Ovary (tissue), 10 donors: ENCODE measurements at regions of chr17 and their contacts with region 1.

Region 1: GRCh38 chr17:31834448-31834847 is 24.6 kb downstream of the COPRS start:
- DNase-seq: no peak
- H3K4me3 ChIP-seq: no peak overlapping the region
- H3K27ac ChIP-seq: no peak overlapping the region
- H3K4me1 ChIP-seq: no peaks in the 10 kb centered on the region
- H3K27me3 ChIP-seq: no peaks in the 10 kb centered on the region
- CTCF ChIP-seq: no peak
- EP300 ChIP-seq: no peak
- POLR2A ChIP-seq: no peak

Region 2: GRCh38 chr17:31549525-31550388 is 284.7 kb before region 1 on chr17:
- intact Hi-C with region 1: loop called in 1 of 4 experiments (anchors 5 kb)
- DNase-seq: peak; percentile 88 to 93 (median 92)
- H3K4me3 ChIP-seq: peak overlapping the region; percentile 99
- H3K27ac ChIP-seq: peak overlapping the region; percentile 84 to 91
- H3K4me1 ChIP-seq: no peaks in the 10 kb centered on the region
- H3K27me3 ChIP-seq: no peaks in the 10 kb centered on the region
- CTCF ChIP-seq: no peak
- EP300 ChIP-seq: no peak
- POLR2A ChIP-seq: peak; percentile 44